Dorsolateral prefrontal cortex (tissue), 120 donors: ENCODE measurements at regions of chr18 and their contacts with region 1.

Region 1: GRCh38 chr18:48657447-48658120 is 118.8 kb downstream of the CTIF start:
- DNase-seq: peak in 5 of 10 donors; percentile 67 to 83 (median 74)
- H3K4me3 ChIP-seq: peak overlapping the region in 2 of 59 donors; percentile 2 to 10
- H3K27ac ChIP-seq: peak overlapping the region in 46 of 59 donors; percentile 14 to 80 (median 64)
- H3K27me3 ChIP-seq: no peaks in the 10 kb centered on the region
- CTCF ChIP-seq: no peak

Region 2: GRCh38 chr18:48538531-48539405 is 118.8 kb before region 1 on chr18 and contains the start of gene CTIF:
- intact Hi-C with region 1: loop called in 1 of 2 experiments (anchors 5 kb)
- DNase-seq: peak; percentile 94 to 100 (median 98)
- H3K4me3 ChIP-seq: peak within 1 kb of the TSS; percentile 61 to 97 (median 86)
- H3K27ac ChIP-seq: peak within 1 kb of the TSS; percentile 73 to 97 (median 92)
- H3K27me3 ChIP-seq: no peaks in the 10 kb centered on the region
- CTCF ChIP-seq: peak in 26 of 56 donors; percentile 7 to 47 (median 32)
- total RNA-seq, gene CTIF: 148 to 308 (median 218) TPM

Region 3: DNA sequence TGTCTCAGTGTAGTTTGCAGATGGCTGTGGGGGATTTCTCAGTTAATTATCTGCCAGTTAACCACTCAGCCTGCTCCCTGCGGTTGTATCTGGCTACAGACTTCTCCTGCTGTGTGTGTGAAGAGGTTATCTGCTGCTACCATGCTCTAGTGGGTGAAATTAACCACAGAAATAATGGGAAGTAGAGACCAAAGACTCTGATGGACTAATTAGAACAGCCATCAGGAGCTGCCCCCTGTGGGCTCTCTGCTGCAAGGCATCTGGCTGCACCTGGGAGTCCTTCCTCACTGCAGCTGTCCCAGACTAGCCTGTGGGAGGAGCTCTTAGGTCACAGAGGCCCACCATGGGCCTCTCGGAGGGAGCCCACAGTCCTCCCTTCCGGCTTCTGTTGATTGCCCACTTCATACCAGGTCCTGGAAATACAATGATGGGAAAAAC is 52.2 kb before region 1 on chr18:
- intact Hi-C with region 1: loop called in 1 of 2 experiments (anchors 5 kb)
- DNase-seq: peak in 1 of 10 donors; percentile 64
- H3K4me3 ChIP-seq: no peak overlapping the region
- H3K27ac ChIP-seq: peak overlapping the region in 5 of 59 donors; percentile 2 to 61 (median 24)
- H3K27me3 ChIP-seq: no peaks in the 10 kb centered on the region
- CTCF ChIP-seq: peak in 44 of 56 donors; percentile 8 to 66 (median 36)

Region 4: GRCh38 chr18:48834413-48835031 is 176.9 kb after region 1 on chr18:
- intact Hi-C with region 1: no loop called
- DNase-seq: peak in 9 of 10 donors; percentile 27 to 81 (median 61)
- H3K4me3 ChIP-seq: peak overlapping the region in 5 of 59 donors; percentile 1 to 32 (median 17)
- H3K27ac ChIP-seq: peak overlapping the region in 10 of 59 donors; percentile 2 to 56 (median 21)
- H3K27me3 ChIP-seq: no peaks in the 10 kb centered on the region
- CTCF ChIP-seq: no peak

Region 5: GRCh38 chr18:48889115-48889941 is 231.7 kb after region 1 on chr18:
- intact Hi-C with region 1: no loop called
- DNase-seq: peak in 7 of 10 donors; percentile 37 to 65 (median 48)
- H3K4me3 ChIP-seq: no peak overlapping the region
- H3K27ac ChIP-seq: peak overlapping the region in 14 of 59 donors; percentile 3 to 50 (median 30)
- H3K27me3 ChIP-seq: no peaks in the 10 kb centered on the region
- CTCF ChIP-seq: no peak